Esophagus muscularis mucosa (tissue), 4 donors: ENCODE measurements at regions of chr3 and their contacts with region 1.

Region 1: DNA sequence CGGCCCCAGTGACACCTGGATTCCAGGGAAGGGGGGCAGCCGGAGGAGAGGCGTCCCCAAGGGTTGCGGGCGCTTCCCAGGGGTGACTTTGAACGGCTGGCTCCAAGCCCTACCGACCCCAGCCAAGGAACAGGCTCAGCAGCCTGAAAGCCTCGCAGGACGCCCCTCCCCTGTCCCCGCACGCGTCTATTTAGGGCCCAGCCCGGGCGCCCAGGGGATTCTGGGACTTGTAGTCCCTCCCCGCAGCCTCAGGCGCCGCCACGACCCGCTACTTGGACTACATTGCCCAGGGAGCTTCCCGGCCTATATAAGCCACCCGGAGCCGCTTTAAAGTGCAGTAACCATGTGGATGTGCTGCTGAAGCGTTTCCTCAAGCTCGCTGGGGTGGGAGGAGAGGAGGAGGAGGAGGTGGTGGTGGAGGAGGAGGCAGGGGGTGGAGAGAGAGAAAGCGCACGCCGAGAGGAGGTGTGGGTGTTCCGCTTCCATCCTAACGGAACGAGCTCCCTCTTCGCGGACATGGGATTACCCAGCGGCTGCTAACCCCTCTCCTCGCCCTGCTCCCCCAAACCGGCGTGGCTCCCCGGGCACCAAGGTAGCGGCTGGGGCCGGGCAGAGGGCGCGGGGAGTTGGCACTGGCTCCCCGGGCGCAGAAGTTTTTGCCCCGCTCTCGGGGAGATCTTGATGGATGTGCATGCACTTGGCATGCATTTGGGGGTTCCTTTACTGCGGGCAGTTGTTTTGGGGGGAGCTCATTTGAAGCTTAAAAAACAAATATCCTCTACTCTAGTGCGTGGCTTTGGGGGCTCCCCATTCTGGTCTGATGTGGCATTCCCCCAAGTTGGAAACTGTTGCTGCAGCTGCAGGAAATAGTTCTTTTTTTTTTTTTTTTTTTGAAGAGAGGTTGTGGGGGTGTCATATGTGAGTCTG is at the start of gene ITPR1:
- DNase-seq: peak; percentile 100
- H3K4me3 ChIP-seq: peak within 1 kb of the TSS; percentile 75 to 95 (median 84)
- H3K27ac ChIP-seq: peak within 1 kb of the TSS; percentile 91 to 95 (median 94)
- H3K4me1 ChIP-seq: peaks cover 23 to 57% (median 48%) of the 10 kb centered on the region in 4 donors
- H3K27me3 ChIP-seq: no peaks in the 10 kb centered on the region
- CTCF ChIP-seq: no peak
- EP300 ChIP-seq: no peak
- POLR2A ChIP-seq: peak; percentile 97
- total RNA-seq, gene ITPR1: 204 to 271 (median 222) TPM

Region 2: DNA sequence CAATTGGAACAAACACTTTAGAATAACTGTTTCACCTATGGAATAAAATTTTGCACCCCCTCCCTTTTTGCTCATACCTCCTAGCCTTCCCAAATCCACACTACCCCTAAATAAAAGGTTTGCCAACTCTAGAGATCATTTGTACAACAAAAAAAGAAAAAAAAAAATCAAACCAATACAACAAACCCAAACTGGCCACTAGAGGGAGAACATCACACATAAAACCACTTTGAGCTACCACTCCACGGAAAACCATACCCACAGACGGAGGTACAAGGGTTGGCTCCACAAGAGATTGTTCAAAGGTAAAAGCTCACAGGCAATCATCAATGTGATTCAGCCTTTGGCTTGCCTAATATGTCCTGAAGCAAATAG is 142.5 kb before region 1 on chr3:
- intact Hi-C with region 1: loop called (anchors 10 kb)
- DNase-seq: no peak
- H3K4me3 ChIP-seq: peak overlapping the region; percentile 24 to 45 (median 34)
- H3K27ac ChIP-seq: peak overlapping the region; percentile 40 to 70 (median 58)
- H3K4me1 ChIP-seq: peaks cover 4 to 22% (median 15%) of the 10 kb centered on the region in 4 donors
- H3K27me3 ChIP-seq: no peaks in the 10 kb centered on the region
- CTCF ChIP-seq: peak; percentile 68 to 81 (median 75)
- EP300 ChIP-seq: no peak
- POLR2A ChIP-seq: no peak

Region 3: DNA sequence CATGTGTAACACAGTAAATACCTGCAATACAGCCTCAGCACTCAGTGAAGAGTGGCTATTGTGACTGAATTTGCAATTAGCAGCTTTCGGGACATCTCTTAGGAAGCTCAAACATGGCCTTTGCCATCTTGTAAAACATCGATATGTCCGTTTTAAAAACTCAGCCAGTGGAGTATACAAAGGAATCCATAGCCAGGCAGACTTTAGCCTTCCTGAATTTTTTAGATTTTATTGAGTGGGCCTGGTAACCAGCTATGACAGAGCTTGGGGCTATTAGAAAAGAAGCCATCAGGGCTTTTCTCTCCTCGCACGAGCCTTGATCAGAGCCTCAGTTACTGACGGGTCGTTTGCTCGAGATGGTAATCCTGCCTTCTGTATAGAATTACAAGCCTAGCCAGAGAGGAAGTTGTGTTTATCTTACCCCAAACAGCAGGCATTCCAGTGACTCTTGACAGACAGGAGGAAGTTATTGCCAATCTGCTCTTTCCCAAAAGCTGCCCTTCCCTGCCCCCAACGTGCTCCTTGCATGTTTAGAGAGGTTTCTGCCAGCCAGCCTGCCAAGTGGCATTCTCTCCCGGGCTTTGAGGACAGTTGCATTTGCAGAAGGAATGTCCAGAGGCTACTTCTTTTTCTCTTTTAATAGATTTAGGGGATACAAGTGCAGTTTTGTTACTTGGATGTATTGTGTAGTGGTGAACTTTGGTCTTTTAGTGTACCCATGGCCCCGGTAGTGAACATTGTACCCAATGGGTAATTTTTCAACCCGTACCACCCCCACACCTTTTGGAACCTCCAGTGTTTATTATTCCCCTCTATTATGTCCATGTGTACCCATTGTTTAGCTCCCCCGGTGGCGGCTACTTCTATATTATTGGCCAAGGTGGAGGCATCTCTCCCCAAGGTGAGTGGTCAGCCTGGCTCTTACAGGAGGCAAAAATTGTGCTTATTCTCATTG is 40.5 kb after region 1 on chr3:
- intact Hi-C with region 1: loop called (anchors 5 kb)
- DNase-seq: no peak
- H3K4me3 ChIP-seq: peak overlapping the region in 3 of 4 donors; percentile 7 to 25 (median 24)
- H3K27ac ChIP-seq: peak overlapping the region; percentile 57 to 77 (median 68)
- H3K4me1 ChIP-seq: peaks cover 36 to 85% (median 72%) of the 10 kb centered on the region in 4 donors
- H3K27me3 ChIP-seq: no peaks in the 10 kb centered on the region
- CTCF ChIP-seq: no peak
- EP300 ChIP-seq: no peak
- POLR2A ChIP-seq: no peak

Region 4: GRCh38 chr3:4546346-4547178 is 53.3 kb after region 1 on chr3:
- intact Hi-C with region 1: no loop called
- DNase-seq: no peak
- H3K4me3 ChIP-seq: no peak overlapping the region
- H3K27ac ChIP-seq: peak overlapping the region; percentile 28 to 48 (median 38)
- H3K4me1 ChIP-seq: peaks cover 4 to 62% (median 55%) of the 10 kb centered on the region in 4 donors
- H3K27me3 ChIP-seq: no peaks in the 10 kb centered on the region
- CTCF ChIP-seq: no peak
- EP300 ChIP-seq: no peak
- POLR2A ChIP-seq: no peak

Region 5: GRCh38 chr3:4584456-4585249 is 91.4 kb after region 1 on chr3:
- intact Hi-C with region 1: loop called (anchors 2 kb)
- DNase-seq: no peak
- H3K4me3 ChIP-seq: peak overlapping the region; percentile 40 to 50 (median 44)
- H3K27ac ChIP-seq: peak overlapping the region; percentile 76 to 82 (median 78)
- H3K4me1 ChIP-seq: peaks cover 61 to 97% (median 83%) of the 10 kb centered on the region in 4 donors
- H3K27me3 ChIP-seq: no peaks in the 10 kb centered on the region
- CTCF ChIP-seq: peak; percentile 40 to 43 (median 41)
- EP300 ChIP-seq: no peak
- POLR2A ChIP-seq: no peak

Region 6: GRCh38 chr3:4633078-4634004 is 140.1 kb after region 1 on chr3:
- intact Hi-C with region 1: loop called (anchors 5 kb)
- DNase-seq: no peak
- H3K4me3 ChIP-seq: no peak overlapping the region
- H3K27ac ChIP-seq: peak overlapping the region in 2 of 4 donors; percentile 36 to 37
- H3K4me1 ChIP-seq: peaks cover 0 to 18% (median 4%) of the 10 kb centered on the region in 4 donors
- H3K27me3 ChIP-seq: no peaks in the 10 kb centered on the region
- CTCF ChIP-seq: peak; percentile 79 to 87 (median 86)
- EP300 ChIP-seq: no peak
- POLR2A ChIP-seq: no peak